ENCODE measurements at regions of chr4 and their contacts with region 1.

Region 1: DNA sequence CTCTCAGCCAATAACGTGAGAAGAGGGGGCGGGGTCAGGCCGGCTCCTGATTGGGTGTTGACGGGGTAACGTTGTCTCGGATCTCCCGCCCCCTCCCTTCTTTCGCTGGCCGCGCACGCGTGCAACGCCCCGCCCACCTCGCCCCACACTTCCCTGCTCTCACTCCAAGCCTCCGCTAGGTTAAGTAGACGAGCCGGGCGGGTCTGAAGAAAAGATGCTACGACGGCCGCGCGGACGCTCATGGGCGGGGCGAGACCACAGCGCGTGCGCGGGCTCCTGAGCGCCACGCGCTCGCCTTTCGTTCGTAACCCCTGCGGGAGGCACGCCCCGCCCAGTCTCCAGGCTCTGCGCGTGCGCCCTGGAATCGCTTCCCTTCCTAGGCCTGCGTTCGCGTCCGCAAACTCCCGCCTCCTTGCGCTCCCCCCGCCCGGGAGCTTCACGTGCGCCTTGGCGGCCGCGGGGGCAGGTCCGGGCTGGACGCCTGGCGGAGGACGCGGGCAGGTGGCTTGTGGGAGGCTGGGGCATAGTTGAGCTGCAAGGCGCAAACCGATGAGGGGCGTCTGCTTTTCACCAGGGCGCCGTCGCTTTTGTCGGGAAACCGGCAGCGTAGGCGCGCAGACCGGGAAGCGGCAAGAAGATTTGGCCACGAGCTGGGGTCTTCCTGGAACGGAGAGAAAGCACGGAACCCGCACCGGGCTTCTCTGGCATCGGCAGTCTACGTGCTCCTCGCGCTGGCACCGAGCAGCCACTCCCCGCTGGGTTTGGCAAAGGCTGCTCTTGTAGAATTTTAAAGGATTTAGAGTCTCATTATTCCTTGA is 467 bp upstream of the PGRMC2 start:
- DNase-seq: peak; percentile 100
- H3K4me3 ChIP-seq: peak overlapping the region; percentile 66 to 84 (median 73)
- H3K27ac ChIP-seq: peak overlapping the region; percentile 83
- H3K4me1 ChIP-seq: peaks cover 23% of the 10 kb centered on the region
- H3K27me3 ChIP-seq: no peaks in the 10 kb centered on the region
- CTCF ChIP-seq: peak in 1 of 2 donors; percentile 26
- POLR2A ChIP-seq: peak; percentile 80

Region 2: DNA sequence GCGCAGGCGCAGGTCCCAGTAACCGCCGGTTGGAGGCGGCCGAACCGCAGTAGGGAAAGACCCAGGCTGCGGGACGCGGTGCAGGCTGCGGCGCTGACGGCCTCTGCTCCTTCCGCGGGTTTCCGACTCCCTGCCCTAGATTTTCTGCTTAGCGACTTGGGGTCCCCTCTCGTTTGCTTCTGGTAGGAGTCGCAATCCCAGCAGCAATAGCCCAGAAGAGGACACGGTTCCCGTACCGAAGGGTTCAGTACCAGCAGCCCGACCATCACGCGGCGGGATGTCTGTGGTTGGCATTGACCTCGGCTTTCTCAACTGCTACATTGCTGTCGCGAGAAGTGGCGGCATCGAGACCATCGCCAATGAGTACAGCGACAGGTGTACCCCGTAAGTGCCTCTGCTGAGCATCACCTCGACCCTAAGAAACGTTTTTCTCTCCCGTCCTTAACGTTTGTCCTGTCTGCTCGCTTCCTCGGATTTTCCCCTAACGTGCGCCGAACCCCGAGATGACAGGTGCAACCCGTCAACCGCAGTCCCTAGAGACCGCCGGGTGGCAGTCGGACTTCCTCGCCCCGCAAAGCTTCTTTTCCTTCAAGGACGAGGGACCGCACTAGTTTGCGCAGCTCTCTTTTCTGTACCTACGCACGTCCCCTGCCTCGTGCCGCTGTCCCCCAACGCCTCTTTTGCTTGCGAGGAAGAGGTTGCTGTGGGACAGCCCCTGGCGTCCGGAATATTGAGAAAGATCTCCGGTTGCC is 505.6 kb before region 1 on chr4 and contains the start of gene HSPA4L:
- CTCF ChIA-PET with region 1: no interaction called
- POLR2A ChIA-PET with region 1: no interaction called
- dilution Hi-C with region 1: no loop called
- intact Hi-C with region 1: loop called (anchors 5 kb)
- DNase-seq: peak; percentile 89
- H3K4me3 ChIP-seq: peak within 1 kb of the TSS; percentile 35 to 53 (median 53)
- H3K27ac ChIP-seq: peak within 1 kb of the TSS; percentile 50
- H3K4me1 ChIP-seq: peaks cover 2% of the 10 kb centered on the region
- H3K27me3 ChIP-seq: peaks cover 0 to 2% of the 10 kb centered on the region in 2 experiments
- CTCF ChIP-seq: peak in 1 of 2 donors; percentile 41
- POLR2A ChIP-seq: peak; percentile 68
- total RNA-seq, gene HSPA4L: 10.8 and 12.4 TPM in 2 replicates

Region 3: DNA sequence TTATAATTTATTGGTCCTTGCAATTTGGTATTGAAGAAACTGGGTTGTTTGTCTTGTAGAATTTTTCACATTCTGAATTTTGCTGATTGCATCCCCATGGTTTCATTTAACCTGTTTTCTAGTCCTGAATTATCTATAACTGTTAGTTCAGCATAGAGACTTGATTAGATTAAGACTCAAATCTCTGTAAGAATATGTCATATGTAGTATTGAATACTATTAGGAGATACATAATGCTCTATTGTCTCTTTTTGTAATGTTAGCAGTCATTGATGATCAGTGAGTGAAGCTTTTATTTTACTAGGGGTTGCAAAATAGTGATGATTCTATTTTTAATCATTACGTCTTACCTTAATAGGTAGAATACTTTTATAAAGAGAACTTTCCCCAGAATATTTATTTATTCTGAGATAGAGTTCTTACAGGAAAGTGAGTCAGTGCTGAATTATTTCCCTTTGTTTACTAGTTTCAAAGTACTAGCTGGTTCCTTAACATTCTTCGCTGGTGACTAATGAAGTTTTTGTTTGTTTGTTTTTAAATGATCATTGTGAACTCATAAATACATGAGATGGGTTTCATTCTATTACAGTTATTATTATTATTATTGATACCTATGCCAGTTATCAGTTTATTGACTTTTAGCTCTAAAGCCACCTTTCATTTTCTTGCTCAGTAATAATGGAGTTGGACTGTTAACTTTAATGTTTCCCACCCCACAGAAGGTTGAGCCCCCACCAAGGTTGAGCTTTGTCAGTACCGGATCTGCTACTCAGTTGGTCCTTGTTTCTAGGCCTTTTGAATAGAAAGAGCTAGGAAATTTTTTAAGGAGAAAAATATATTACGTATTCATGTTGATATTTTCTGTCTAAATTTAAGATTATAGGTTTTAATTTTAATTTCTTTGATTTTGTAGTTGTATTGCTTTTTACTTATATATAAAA is 124.6 kb before region 1 on chr4:
- CTCF ChIA-PET with region 1: no interaction called
- POLR2A ChIA-PET with region 1: no interaction called
- dilution Hi-C with region 1: no loop called
- intact Hi-C with region 1: loop called (anchors 1 kb)
- DNase-seq: peak; percentile 87
- H3K4me3 ChIP-seq: peak overlapping the region in 1 of 3 experiments; percentile 48
- H3K27ac ChIP-seq: peak overlapping the region; percentile 99
- H3K4me1 ChIP-seq: peaks cover 60% of the 10 kb centered on the region
- H3K27me3 ChIP-seq: no peaks in the 10 kb centered on the region
- CTCF ChIP-seq: no peak
- POLR2A ChIP-seq: no peak

Region 4: DNA sequence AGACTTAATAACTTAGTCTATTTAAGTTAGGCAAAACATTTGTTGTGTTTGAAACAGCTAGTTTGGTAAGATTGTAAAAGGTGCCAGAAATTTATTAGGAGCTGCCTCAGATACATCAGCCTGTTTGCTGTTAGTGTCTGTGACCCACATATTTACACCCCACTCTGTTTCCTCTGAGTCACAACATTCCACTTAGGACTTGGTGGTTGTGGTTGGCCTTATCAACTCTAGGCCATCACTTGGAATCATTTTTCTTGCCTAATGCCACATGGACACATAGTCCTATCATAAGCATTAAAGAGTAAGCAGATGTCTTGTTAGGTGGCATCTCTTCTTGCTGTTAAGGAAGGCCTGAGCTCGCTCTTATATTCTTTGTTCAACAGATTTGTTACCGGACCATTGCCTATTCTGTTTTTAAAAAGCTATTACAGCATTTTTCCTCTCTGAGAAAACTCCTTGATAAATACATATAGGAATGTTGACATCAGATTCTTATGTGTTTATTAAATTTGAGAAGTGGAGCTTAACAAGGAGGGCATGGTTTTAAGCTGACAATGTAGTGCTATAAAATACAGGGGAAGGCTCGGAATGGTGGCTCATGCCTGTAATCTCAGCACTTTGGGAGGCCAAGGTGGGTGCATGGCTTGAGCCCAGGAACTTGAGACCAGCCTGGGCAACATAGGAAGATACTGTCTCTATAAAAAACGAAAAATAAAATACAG is 50.7 kb after region 1 on chr4:
- CTCF ChIA-PET with region 1: interaction called, 3 read pairs
- POLR2A ChIA-PET with region 1: no interaction called
- dilution Hi-C with region 1: no loop called
- intact Hi-C with region 1: loop called (anchors 1 kb)
- DNase-seq: peak; percentile 73
- H3K4me3 ChIP-seq: no peak overlapping the region
- H3K27ac ChIP-seq: peak overlapping the region; percentile 81
- H3K4me1 ChIP-seq: peaks cover 20% of the 10 kb centered on the region
- H3K27me3 ChIP-seq: no peaks in the 10 kb centered on the region
- CTCF ChIP-seq: no peak
- POLR2A ChIP-seq: no peak

Region 5: GRCh38 chr4:128528793-128529553 is 240.9 kb after region 1 on chr4:
- CTCF ChIA-PET with region 1: no interaction called
- POLR2A ChIA-PET with region 1: no interaction called
- dilution Hi-C with region 1: no loop called
- intact Hi-C with region 1: loop called (anchors 5 kb)
- DNase-seq: peak; percentile 88
- H3K4me3 ChIP-seq: no peak overlapping the region
- H3K27ac ChIP-seq: peak overlapping the region; percentile 95
- H3K4me1 ChIP-seq: peaks cover 29% of the 10 kb centered on the region
- H3K27me3 ChIP-seq: no peaks in the 10 kb centered on the region
- CTCF ChIP-seq: no peak
- POLR2A ChIP-seq: no peak

Region 6: DNA sequence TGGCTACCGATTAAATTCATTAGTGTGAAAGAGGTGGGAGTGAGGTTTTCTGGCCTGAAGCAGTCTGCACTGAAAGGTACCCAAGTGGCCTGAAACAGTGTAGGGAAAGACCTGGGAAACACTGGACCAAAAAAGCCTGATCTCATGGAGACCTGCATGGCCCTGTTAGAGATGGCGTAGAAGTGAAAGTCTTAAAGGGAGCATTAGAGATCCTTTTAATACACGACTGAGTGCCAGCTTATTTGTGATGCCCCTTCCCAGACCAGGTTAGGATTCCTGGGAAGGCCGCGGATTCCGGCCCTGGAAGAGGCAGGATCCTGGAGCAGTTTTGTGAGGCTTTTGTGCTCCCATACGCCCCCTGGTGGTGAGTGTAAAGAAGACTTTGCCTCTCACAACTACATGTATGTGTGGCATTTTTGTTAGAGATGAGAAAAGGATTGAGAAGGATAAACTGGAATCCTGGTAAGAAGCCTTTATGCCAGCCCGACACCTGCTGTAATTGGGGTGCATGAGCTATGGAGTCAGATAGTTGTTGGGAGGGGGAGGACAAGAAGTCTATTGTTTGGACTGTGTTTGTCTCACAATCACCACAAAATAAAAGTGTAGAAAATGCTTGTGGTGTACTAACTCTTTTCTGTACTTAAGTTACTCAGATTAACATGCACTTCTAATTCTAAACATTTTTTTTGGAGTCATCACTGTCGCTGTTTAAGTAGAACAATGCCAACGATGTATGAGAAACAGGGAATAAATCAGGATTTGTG is 575.4 kb after region 1 on chr4:
- CTCF ChIA-PET with region 1: interaction called, 3 read pairs
- POLR2A ChIA-PET with region 1: no interaction called
- dilution Hi-C with region 1: no loop called
- intact Hi-C with region 1: loop called (anchors 1 kb)
- DNase-seq: peak; percentile 81
- H3K4me3 ChIP-seq: no peak overlapping the region
- H3K27ac ChIP-seq: no peak overlapping the region
- H3K4me1 ChIP-seq: peaks cover 11% of the 10 kb centered on the region
- H3K27me3 ChIP-seq: no peaks in the 10 kb centered on the region
- CTCF ChIP-seq: peak; percentile 78 to 83
- POLR2A ChIP-seq: no peak